CD4-positive, alpha-beta T cell (primary cell): ENCODE measurements at regions of chr13 and their contacts with region 1.

Region 1: DNA sequence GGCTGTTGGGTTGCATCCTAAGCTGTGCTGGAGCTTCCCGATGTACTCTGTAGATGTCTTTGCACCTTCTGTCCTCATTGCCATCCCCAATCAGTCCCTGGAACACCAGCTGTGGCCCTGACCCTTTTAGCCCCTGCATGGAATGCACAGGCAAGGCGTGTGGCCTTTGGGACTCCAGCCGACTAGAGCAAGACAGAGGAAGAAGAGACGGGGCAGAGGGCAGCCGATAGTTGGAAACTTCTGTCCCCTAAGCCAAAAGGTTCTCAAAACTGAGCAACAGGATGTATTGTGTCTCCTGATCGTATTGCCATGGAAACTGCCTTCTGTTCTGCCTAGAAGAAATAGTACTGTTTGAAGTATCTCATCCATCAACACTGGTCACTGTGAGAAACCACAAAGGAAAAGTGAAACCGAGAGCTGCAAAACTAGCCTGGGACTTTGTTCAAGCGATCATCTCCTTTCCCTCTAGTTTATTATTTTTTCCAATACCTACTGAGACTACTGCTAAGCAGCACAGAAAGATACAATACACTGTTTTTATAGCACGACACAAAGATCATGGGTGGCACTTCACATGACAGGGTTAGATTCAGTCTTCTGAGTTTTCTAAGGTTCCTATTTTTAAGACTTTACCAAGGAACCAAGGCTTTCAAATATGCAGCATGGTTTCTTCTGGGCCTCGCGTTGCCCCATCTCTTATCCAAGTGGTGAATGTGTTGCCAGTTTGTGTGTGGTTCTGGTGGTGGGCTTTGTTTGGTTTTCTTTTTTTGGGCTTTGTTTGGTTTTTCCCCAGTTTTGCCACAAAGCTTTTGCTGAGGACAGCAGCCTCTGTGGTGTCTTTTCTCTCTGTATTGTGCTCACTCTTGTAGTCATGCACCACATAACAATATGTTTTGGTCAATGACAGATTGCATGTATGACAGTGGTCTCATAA is 49.2 kb upstream of the GPR183 start:
- DNase-seq: peak in 12 of 14 experiments; percentile 42 to 97 (median 56)
- ATAC-seq: peak; percentile 54
- H3K4me3 ChIP-seq: peak overlapping the region; percentile 19
- H3K4me3 Mint-ChIP-seq: peak overlapping the region; percentile 49
- H3K27ac ChIP-seq: peak overlapping the region; percentile 93 to 97
- H3K27ac Mint-ChIP-seq: peak overlapping the region; percentile 97
- H3K4me1 ChIP-seq: peaks cover 95% of the 10 kb centered on the region
- H3K4me1 Mint-ChIP-seq: peaks cover 100% of the 10 kb centered on the region
- H3K27me3 ChIP-seq: no peaks in the 10 kb centered on the region
- H3K27me3 Mint-ChIP-seq: no peaks in the 10 kb centered on the region
- CTCF ChIP-seq: no peak

Region 2: GRCh38 chr13:99200432-99201167 is 155.8 kb before region 1 on chr13 and contains the start of gene UBAC2:
- CTCF ChIA-PET with region 1: no interaction called
- POLR2A ChIA-PET with region 1: interaction called, 11 read pairs
- intact Hi-C with region 1: no loop called
- DNase-seq: peak; percentile 90 to 100 (median 97)
- ATAC-seq: peak; percentile 79
- H3K4me3 ChIP-seq: peak within 1 kb of the TSS; percentile 99
- H3K4me3 Mint-ChIP-seq: peak within 1 kb of the TSS; percentile 95
- H3K27ac ChIP-seq: peak within 1 kb of the TSS; percentile 97 to 99
- H3K27ac Mint-ChIP-seq: peak within 1 kb of the TSS; percentile 93
- H3K4me1 ChIP-seq: peaks cover 36% of the 10 kb centered on the region
- H3K4me1 Mint-ChIP-seq: peaks cover 67% of the 10 kb centered on the region
- H3K27me3 ChIP-seq: no peaks in the 10 kb centered on the region
- H3K27me3 Mint-ChIP-seq: no peaks in the 10 kb centered on the region
- CTCF ChIP-seq: no peak
- total RNA-seq, gene UBAC2: 59.8 to 67.4 TPM

Region 3: GRCh38 chr13:99301913-99302636 is 54.4 kb before region 1 on chr13:
- CTCF ChIA-PET with region 1: interaction called, 11 read pairs
- POLR2A ChIA-PET with region 1: interaction called, 220 read pairs
- intact Hi-C with region 1: loop called in 1 of 2 experiments (anchors 1 kb)
- DNase-seq: no peak
- ATAC-seq: no peak
- H3K4me3 ChIP-seq: peak overlapping the region; percentile 83
- H3K4me3 Mint-ChIP-seq: peak overlapping the region; percentile 97
- H3K27ac ChIP-seq: peak overlapping the region; percentile 68 to 74
- H3K27ac Mint-ChIP-seq: peak overlapping the region; percentile 89
- H3K4me1 ChIP-seq: peaks cover 42% of the 10 kb centered on the region
- H3K4me1 Mint-ChIP-seq: peaks cover 72% of the 10 kb centered on the region
- H3K27me3 ChIP-seq: no peaks in the 10 kb centered on the region
- H3K27me3 Mint-ChIP-seq: no peaks in the 10 kb centered on the region
- CTCF ChIP-seq: no peak

Region 4: GRCh38 chr13:99322297-99323103 is 33.9 kb before region 1 on chr13:
- CTCF ChIA-PET with region 1: interaction called, 10 read pairs
- POLR2A ChIA-PET with region 1: interaction called, 36 read pairs
- intact Hi-C with region 1: loop called (anchors 1 to 5 kb)
- DNase-seq: peak in 7 of 14 experiments; percentile 16 to 84 (median 57)
- ATAC-seq: peak; percentile 72
- H3K4me3 ChIP-seq: peak overlapping the region; percentile 19
- H3K4me3 Mint-ChIP-seq: peak overlapping the region; percentile 59
- H3K27ac ChIP-seq: peak overlapping the region; percentile 69 to 80
- H3K27ac Mint-ChIP-seq: peak overlapping the region; percentile 93
- H3K4me1 ChIP-seq: peaks cover 58% of the 10 kb centered on the region
- H3K4me1 Mint-ChIP-seq: peaks cover 83% of the 10 kb centered on the region
- H3K27me3 ChIP-seq: no peaks in the 10 kb centered on the region
- H3K27me3 Mint-ChIP-seq: no peaks in the 10 kb centered on the region
- CTCF ChIP-seq: no peak

Region 5: DNA sequence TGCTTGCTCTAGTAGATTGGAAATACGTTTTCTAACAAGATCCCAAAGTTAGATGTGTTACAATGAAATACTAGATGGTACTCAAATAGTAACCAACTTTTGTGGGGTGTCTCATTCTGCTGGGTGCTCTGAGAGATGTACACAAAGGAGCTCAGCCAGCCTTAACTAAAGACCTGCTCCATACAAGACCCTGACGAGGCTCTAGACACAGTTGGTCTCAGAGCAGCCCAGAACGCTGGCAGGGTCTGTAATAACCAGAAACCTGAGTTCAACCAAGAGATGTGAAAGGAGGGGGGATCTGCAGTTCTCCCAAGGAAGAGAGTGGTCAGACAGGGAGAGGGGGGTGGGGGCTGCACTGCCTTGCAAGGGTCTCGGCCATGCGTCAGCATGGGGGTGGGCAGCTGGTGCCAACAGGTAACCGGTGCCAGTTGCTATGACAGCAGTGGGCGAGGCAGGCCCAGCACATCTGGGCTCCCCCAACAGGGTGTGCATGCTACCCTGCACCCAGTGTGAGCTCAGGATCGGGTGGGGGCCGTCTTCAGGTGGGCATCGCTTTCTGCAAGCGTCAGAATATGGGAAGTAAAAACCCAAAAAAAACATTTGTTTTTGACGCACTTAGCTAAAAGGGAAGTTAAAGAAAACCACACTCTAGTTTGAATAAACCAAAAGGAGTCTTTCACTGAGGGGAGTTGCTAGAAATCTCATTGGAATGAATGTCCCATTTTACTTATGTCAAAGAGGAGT is 18.7 kb after region 1 on chr13:
- CTCF ChIA-PET with region 1: interaction called, 15 read pairs
- POLR2A ChIA-PET with region 1: interaction called, 153 read pairs
- intact Hi-C with region 1: loop called in 1 of 2 experiments (anchors 1 kb)
- DNase-seq: peak in 11 of 14 experiments; percentile 44 to 92 (median 70)
- ATAC-seq: peak; percentile 86
- H3K4me3 ChIP-seq: no peak overlapping the region
- H3K4me3 Mint-ChIP-seq: peak overlapping the region; percentile 8
- H3K27ac ChIP-seq: peak overlapping the region; percentile 58 to 75
- H3K27ac Mint-ChIP-seq: peak overlapping the region; percentile 97
- H3K4me1 ChIP-seq: peaks cover 74% of the 10 kb centered on the region
- H3K4me1 Mint-ChIP-seq: peaks cover 93% of the 10 kb centered on the region
- H3K27me3 ChIP-seq: no peaks in the 10 kb centered on the region
- H3K27me3 Mint-ChIP-seq: no peaks in the 10 kb centered on the region
- CTCF ChIP-seq: no peak

Region 6: DNA sequence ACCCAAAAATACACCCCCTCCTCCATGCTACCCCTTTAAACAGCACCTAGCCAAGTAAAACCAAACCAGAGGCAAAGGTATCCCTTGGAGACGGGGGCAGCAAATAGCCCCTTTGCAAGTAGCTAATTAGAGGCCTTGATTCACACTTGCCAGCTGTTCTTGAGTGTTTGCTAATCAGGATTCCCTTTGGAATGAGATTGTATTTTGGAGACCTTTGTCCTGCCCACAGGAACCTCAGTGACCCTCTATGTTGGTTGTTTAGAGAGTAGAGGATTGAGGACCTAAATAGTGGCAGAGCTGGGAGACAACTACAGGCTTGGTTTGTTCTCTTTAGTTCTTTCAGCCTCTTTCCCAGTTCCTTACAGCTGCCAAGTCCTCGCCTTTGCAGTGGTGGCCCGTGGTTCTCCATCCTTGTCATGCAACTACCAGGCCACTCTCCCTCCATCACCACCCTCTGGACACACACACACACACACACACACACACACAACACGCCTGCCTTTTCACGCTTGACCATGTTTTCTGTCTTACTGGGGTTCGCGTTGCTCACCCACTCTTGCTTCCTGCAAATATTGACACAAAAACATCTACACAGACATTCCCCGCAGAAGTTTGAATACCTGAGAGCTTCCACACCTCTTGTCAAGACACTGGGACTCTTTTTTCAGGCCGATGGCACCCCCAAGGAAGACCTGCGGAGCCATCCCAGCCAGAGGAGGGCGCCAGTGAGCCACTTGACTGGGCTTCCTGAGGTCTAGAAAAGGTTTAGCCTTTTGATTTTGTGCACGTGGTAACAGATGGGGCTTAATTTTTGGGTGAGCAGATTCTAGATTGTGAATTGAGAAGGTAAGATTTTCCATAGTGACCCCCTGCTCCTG is 30.7 kb after region 1 on chr13:
- CTCF ChIA-PET with region 1: interaction called, 7 read pairs
- POLR2A ChIA-PET with region 1: interaction called, 76 read pairs
- intact Hi-C with region 1: loop called in 1 of 2 experiments (anchors 1 kb)
- DNase-seq: peak; percentile 81 to 94 (median 88)
- ATAC-seq: peak; percentile 22
- H3K4me3 ChIP-seq: no peak overlapping the region
- H3K4me3 Mint-ChIP-seq: peak overlapping the region; percentile 21
- H3K27ac ChIP-seq: peak overlapping the region; percentile 31 to 57
- H3K27ac Mint-ChIP-seq: peak overlapping the region; percentile 88
- H3K4me1 ChIP-seq: peaks cover 67% of the 10 kb centered on the region
- H3K4me1 Mint-ChIP-seq: peaks cover 61% of the 10 kb centered on the region
- H3K27me3 ChIP-seq: no peaks in the 10 kb centered on the region
- H3K27me3 Mint-ChIP-seq: no peaks in the 10 kb centered on the region
- CTCF ChIP-seq: peak; percentile 88